ENCODE measurements at regions of chr5 and their contacts with region 1.

Region 1: DNA sequence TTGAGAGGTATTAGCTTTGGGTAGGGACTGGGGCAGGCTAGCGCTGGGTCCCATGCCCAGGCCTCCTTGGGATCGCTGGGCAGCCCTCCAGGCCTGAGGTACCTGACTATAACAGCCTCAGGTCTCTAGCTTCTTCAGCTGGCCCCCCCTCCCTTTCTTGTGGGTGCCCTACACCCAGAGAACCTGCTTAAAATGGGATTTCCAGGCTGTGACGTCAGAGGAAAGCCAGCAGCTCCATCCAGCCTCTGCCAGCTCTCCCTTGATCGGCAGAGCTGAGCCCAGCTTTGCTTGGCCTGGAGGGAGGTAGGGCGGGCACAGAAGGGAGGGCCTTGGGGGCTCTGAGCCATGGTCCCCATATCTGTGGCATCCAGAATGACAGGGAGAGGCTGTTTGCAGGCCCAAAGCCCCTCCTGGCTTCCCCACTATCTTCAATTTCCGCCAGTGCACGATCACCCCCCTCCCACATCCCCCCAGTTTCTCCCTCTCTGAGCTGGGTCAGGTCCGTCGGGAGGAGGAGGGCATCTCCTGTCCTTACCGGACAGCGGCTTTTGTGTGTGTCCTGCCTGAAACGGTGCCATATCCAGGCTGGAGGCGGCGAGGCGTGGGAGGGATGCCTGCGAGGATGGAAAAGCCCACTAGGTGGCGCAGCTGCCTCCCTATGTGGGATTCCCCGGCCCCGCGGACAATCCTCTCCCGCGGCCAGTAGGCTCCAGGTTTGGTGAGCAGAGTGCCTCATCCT is 10.8 kb downstream of the REEP2 start:
- DNase-seq: peak; percentile 94

Region 2: DNA sequence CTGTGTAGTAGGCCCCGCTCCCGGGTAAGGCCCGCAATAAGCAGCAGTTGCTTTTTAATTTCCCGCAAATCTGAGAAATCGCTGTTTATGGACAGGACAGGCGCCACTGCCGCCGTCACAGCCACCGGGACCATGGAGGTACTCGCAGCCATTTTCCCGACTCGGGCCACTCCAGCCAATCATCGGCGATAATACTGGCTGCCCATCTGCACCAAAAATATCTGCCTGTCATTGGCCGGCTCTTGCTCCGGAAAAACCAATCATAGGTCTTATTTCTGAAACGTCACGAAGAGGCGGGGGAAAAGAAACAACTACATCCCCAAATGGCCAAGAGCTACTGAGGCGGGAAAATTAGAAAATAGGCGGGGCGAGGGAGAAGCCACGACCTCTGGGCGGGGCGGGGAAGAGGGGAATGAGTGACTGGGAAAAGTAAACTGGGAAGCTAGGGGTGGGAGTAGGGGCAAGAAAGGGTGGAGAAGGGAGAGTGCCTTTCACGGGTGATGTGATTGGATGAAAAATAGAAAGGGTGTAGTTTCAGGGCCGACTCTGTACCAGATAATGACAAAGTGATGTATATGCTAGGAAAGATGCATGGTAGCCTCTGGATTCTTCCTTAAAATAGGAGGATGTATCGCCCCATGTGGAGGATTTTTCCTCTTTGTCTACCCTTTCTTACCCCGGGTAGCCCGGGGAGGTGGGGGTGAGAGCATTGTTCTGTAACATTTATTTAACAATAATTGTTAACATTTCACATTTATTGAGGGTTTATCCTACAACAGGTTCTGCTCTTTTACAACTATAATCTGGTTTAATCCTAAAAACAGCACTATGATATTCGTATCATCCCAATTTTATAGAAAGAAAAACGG is 236.3 kb before region 1 on chr5 and contains the start of gene CDC23:
- intact Hi-C with region 1: no loop called
- DNase-seq: peak; percentile 94
- total RNA-seq, gene CDC23: 17.9 TPM

Region 3: DNA sequence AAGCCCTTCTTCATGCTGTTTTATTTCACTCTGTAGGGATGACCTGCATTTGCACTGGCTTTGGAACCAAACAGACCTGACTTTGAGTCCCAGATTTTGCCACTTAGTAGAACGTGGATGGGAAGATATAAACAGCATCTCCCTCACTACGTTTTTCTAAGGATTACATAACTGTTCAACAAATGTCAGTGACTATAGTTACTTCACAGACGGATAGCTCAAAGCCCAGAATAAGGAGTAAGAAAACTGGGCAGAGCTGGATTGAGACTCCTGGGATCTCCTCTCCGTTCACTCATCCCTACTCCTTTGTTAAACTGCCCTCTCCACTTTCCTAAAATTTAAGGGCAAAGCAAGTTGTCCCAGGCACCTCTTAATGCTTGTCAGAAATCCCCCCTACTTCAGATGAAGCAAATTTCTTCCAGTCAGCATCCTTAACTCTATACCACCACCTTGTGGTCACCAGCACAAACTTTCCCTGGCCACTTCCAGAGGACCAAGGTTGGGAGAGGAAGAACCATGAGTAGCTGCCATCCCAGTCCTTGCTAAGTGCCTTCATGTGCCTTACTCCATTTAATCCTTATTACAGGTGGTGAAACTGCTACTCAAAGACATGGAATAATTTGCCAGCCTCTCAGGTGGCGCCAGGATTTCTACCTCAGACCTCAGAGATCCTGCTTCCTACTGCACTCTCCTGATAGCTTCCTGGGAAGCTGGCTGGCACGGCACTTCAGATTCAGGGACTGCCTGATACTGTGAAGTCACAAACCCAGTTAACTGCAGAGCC is 54.0 kb after region 1 on chr5:
- intact Hi-C with region 1: loop called (anchors 1 kb)
- DNase-seq: no peak

Measured in cardiac septum (tissue), 1 donor.